Psoas muscle (tissue), 8 donors: ENCODE measurements at regions of chr3 and their contacts with region 1.

Region 1: GRCh38 chr3:192917404-192918274 is at the start of gene MB21D2:
- DNase-seq: peak; percentile 77 to 81
- ATAC-seq: peak; percentile 72 to 85 (median 80)
- H3K4me3 ChIP-seq: peak within 1 kb of the TSS; percentile 71
- H3K27ac ChIP-seq: peak within 1 kb of the TSS; percentile 80
- H3K4me1 ChIP-seq: peaks cover 4% of the 10 kb centered on the region
- H3K27me3 ChIP-seq: no peaks in the 10 kb centered on the region
- CTCF ChIP-seq: no peak
- total RNA-seq, gene MB21D2: 1.3 to 2.6 (median 2.2) TPM

Region 2: GRCh38 chr3:192816351-192816750 is 101.3 kb before region 1 on chr3:
- intact Hi-C with region 1: loop called (anchors 2 to 5 kb)
- DNase-seq: no peak
- ATAC-seq: peak in 2 of 4 donors; percentile 43 to 80
- H3K4me3 ChIP-seq: no peak overlapping the region
- H3K27ac ChIP-seq: no peak overlapping the region
- H3K4me1 ChIP-seq: no peaks in the 10 kb centered on the region
- H3K27me3 ChIP-seq: no peaks in the 10 kb centered on the region
- CTCF ChIP-seq: peak; percentile 82

Region 3: GRCh38 chr3:192840143-192840836 is 77.3 kb before region 1 on chr3:
- intact Hi-C with region 1: no loop called
- DNase-seq: no peak
- ATAC-seq: no peak
- H3K4me3 ChIP-seq: no peak overlapping the region
- H3K27ac ChIP-seq: no peak overlapping the region
- H3K4me1 ChIP-seq: peaks cover 28% of the 10 kb centered on the region
- H3K27me3 ChIP-seq: no peaks in the 10 kb centered on the region
- CTCF ChIP-seq: no peak

Region 4: GRCh38 chr3:192850451-192850981 is 67.1 kb before region 1 on chr3:
- intact Hi-C with region 1: no loop called
- DNase-seq: no peak
- ATAC-seq: no peak
- H3K4me3 ChIP-seq: no peak overlapping the region
- H3K27ac ChIP-seq: no peak overlapping the region
- H3K4me1 ChIP-seq: peaks cover 9% of the 10 kb centered on the region
- H3K27me3 ChIP-seq: no peaks in the 10 kb centered on the region
- CTCF ChIP-seq: no peak

Region 5: DNA sequence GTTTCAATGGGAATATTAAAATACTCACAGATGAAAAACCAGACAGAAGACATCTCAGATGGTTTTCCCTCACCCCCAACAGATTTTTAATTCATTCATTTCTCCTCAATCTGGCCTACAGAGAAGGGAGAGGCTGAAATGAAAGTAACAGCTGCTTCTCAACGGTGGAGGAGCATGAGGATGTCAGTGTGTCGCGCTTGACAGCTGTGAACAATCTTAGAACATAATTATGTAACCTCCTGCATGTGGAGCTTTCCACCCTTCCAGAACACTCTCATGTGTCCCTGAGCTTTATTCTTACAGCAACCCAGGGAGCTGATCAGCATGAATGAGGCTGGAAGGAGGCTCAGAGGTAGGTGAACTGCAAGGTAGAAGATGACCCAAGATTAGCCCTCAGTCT is 52.7 kb before region 1 on chr3:
- intact Hi-C with region 1: loop called in 1 of 2 experiments (anchors 5 kb)
- DNase-seq: no peak
- ATAC-seq: peak; percentile 76 to 84 (median 82)
- H3K4me3 ChIP-seq: no peak overlapping the region
- H3K27ac ChIP-seq: no peak overlapping the region
- H3K4me1 ChIP-seq: peaks cover 10% of the 10 kb centered on the region
- H3K27me3 ChIP-seq: no peaks in the 10 kb centered on the region
- CTCF ChIP-seq: no peak

Region 6: DNA sequence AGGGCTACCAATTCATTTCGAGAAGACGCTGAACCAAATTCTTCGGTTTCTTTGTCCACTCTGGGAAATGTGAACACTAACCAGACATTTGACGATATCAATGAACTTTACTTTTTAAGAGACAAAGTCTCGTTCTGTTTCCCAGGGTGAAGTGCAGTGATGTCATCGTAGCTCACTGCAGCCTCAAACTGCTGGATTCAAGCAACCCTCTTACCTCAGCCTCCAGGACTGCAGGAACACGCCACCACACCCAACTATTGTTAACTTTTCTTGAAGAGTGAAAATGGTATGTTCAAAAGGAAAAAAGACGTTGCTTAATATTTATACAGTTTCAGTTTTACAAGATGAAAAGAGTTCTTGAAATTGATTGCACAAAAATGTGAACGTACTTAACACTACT is 30.6 kb before region 1 on chr3:
- intact Hi-C with region 1: no loop called
- DNase-seq: no peak
- ATAC-seq: no peak
- H3K4me3 ChIP-seq: no peak overlapping the region
- H3K27ac ChIP-seq: no peak overlapping the region
- H3K4me1 ChIP-seq: no peaks in the 10 kb centered on the region
- H3K27me3 ChIP-seq: no peaks in the 10 kb centered on the region
- CTCF ChIP-seq: no peak

Region 7: GRCh38 chr3:193040836-193041672 is 123.4 kb after region 1 on chr3:
- intact Hi-C with region 1: loop called in 1 of 2 experiments (anchors 10 kb)
- DNase-seq: no peak
- ATAC-seq: peak in 1 of 4 donors; percentile 78
- H3K4me3 ChIP-seq: no peak overlapping the region
- H3K27ac ChIP-seq: no peak overlapping the region
- H3K4me1 ChIP-seq: no peaks in the 10 kb centered on the region
- H3K27me3 ChIP-seq: no peaks in the 10 kb centered on the region
- CTCF ChIP-seq: peak; percentile 48